ENCODE measurements at regions of chr5 and their contacts with region 1.

Region 1: GRCh38 chr5:34486160-34486848 is 169.8 kb upstream of the RAI14 start:
- DNase-seq: peak; percentile 66
- CTCF ChIP-seq: peak; percentile 87

Region 2: DNA sequence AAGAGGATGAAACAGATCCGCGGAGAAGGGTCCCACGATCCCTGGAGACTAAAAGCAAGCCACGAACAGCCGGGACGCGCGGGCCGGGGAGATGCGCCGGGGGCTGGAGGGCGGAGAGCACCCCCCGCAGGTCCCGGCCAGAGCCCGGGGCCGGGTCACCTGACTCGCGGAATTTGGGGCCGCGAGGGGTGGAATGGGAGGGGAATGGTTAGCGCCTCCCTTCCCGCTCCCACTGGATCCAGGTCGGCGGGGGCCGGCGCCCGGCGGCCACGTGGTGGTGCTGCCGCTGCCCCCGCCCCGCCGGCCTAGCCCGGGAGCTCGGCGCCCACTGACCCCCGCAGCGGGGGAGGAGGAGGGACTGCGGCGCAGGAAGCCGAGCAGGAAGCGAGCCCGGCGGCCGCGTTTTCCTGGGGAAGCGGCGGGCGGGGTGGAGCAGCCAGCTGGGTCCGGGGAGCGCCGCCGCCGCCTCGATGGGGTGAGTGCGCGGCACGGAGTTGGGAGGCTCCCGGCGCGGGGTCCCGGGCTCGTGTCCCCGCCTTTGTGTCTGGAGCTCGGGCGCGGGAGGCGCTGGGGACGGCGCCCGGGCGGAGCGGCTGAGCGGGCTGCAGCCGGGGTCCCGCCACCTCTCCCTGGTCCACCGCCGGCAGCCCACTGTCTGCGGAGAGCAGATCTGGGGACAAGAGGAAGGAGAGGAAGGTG is 169.8 kb after region 1 on chr5 and contains the start of gene RAI14:
- in situ Hi-C with region 1: no loop called
- DNase-seq: peak; percentile 62
- CTCF ChIP-seq: no peak

Region 3: DNA sequence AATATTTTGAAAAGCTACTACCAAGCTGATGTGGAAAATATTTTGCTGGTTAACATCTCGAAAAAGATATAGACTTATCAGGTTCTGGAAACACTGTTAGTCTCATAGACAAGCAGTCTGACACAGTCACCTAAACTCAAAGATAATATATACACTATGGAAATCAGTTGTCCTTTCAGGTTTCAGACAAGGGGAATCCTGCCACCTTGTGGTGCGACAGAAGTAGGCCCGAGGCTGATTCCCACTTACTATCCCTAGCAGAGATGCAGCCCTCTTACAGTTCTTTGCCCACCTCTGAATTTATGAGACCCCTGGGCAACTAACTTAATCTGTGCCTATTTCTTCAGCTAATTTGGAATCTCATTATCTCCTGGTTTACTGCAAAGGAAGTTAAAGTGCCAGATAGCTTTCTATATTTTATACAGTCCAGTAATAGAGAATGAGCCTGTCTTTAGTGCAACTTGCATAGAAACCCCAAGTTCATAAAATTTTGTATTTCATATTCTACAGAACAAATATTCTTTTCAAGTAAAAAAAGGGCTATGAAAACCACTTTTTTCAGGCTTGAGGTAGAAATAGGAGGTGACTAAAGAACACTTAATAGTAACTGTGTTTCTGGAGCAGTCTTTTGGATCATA is 412.1 kb after region 1 on chr5:
- in situ Hi-C with region 1: loop called (anchors 10 kb)
- DNase-seq: peak; percentile 55
- CTCF ChIP-seq: peak; percentile 81

Region 4: GRCh38 chr5:35003018-35003957 is 517.0 kb after region 1 on chr5:
- in situ Hi-C with region 1: loop called (anchors 25 kb)
- DNase-seq: peak; percentile 79
- CTCF ChIP-seq: peak; percentile 78

Measured in GM13976 (cell line).